Dendritic cell treated with granulocyte-macrophage colony-stimulating factor and Interleukin-4, amounts not matched to agents 40 ng/mL and 50 ng/mL, for 4 days (primary cell): ENCODE measurements at regions of chr17 and their contacts with region 1.

Region 1: DNA sequence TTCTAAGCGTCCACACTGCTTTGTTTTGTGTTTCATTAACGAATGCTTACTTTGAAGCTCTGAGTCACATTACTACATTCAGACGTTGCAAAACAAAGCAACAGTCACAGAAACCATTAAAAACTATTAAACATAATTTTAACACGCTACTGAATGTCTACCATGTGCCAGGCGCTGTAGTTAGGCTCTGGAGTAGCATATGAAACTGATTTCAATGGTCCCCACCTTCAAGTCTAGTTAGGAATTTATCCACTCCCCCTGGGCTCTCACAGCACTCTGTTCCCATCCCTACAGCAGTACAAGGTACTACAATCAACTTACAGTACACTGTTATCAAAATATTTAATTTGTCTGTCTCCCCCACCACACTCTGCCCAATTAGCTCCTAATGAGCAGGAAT is 631 bp downstream of the UTP6 start:
- H3K4me3 Mint-ChIP-seq: no peak overlapping the region
- H3K27ac Mint-ChIP-seq: no peak overlapping the region
- H3K4me1 Mint-ChIP-seq: peaks cover 5% of the 10 kb centered on the region
- H3K27me3 Mint-ChIP-seq: no peaks in the 10 kb centered on the region

Region 2: GRCh38 chr17:31558748-31559644 is 341.9 kb before region 1 on chr17:
- intact Hi-C with region 1: loop called (anchors 5 kb)
- H3K4me3 Mint-ChIP-seq: peak overlapping the region; percentile 68
- H3K27ac Mint-ChIP-seq: peak overlapping the region; percentile 65
- H3K4me1 Mint-ChIP-seq: peaks cover 38% of the 10 kb centered on the region
- H3K27me3 Mint-ChIP-seq: peaks cover 7% of the 10 kb centered on the region

Region 3: GRCh38 chr17:31858642-31859473 is 42.0 kb before region 1 on chr17 and contains the start of gene COPRS:
- intact Hi-C with region 1: loop called (anchors 5 kb)
- H3K4me3 Mint-ChIP-seq: peak within 1 kb of the TSS; percentile 76
- H3K27ac Mint-ChIP-seq: peak within 1 kb of the TSS; percentile 1
- H3K4me1 Mint-ChIP-seq: peaks cover 29% of the 10 kb centered on the region
- H3K27me3 Mint-ChIP-seq: no peaks in the 10 kb centered on the region

Region 4: DNA sequence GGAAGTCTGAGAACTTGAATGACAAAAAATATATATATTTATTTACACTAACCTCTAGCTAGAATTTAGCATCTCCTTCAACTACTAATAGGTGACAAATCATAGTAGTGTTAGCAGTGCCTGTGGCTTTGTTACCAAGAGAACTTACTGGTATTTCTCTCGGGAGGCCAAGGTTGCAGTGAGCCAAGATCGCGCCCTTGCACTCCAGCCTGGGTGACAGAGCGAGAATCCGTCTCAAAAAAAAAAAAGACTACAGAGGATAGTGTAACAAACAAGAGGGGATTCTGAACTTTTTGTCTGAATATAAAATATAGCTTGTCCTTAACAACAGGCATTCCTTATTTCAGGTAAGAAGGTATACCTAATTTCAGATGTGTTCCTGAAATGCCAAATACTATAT is 34.6 kb after region 1 on chr17:
- intact Hi-C with region 1: loop called (anchors 5 kb)
- H3K4me3 Mint-ChIP-seq: no peak overlapping the region
- H3K27ac Mint-ChIP-seq: no peak overlapping the region
- H3K4me1 Mint-ChIP-seq: peaks cover 11% of the 10 kb centered on the region
- H3K27me3 Mint-ChIP-seq: no peaks in the 10 kb centered on the region